Activated naive CD4-positive, alpha-beta T cell treated with anti-CD3 and anti-CD28 coated beads for 36 hours (primary cell): ENCODE measurements at regions of chr7 and their contacts with region 1.

Region 1: DNA sequence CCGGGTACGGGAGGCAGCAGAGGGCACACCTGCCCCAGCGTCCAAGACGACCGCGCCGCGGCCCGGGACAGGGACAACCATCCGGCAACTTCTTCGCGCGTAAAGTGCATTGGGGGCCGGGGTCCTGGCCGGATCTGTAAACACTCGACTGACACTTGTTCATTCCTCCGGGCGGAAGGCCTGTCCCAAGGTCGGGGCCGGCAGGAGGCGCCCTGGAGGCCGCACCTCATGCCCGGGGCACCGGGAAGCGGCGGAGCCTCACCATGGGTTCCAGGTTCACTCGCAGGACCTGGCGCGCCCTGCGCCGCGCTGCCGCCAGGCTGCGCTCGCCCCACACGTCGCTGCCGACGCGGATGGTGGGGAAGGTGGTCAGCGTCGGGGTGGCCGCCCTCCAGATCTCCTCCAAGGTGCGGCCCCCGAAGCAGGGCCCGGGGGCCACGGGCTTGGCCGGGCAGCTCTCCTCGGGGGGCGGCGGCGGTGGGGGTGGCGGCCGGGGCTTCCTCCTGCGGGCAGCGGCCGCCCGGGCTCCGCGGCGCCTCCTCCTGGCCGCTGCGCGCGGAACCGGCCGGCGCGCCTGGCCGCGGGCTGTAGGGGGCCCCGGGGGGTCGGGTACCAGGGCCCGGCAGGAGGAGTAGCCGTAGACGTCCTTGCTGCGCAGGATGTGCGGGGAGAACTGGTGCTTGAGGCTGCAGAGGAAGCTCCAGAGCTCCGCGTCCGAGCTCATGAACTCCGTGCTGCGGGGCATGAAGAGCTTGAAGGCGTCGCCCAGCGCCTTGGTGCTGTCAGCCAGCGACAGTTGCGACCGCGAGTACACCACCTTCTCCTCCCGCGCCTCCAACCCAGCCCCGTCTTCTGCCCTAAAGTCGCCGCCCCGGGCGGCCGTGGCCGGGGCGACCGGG is 746 bp downstream of the CCDC71L start:
- DNase-seq: peak; percentile 87
- H3K4me3 Mint-ChIP-seq: peak overlapping the region; percentile 87
- H3K27ac Mint-ChIP-seq: peak overlapping the region; percentile 95
- H3K4me1 Mint-ChIP-seq: peaks cover 23% of the 10 kb centered on the region
- H3K27me3 Mint-ChIP-seq: no peaks in the 10 kb centered on the region

Region 2: DNA sequence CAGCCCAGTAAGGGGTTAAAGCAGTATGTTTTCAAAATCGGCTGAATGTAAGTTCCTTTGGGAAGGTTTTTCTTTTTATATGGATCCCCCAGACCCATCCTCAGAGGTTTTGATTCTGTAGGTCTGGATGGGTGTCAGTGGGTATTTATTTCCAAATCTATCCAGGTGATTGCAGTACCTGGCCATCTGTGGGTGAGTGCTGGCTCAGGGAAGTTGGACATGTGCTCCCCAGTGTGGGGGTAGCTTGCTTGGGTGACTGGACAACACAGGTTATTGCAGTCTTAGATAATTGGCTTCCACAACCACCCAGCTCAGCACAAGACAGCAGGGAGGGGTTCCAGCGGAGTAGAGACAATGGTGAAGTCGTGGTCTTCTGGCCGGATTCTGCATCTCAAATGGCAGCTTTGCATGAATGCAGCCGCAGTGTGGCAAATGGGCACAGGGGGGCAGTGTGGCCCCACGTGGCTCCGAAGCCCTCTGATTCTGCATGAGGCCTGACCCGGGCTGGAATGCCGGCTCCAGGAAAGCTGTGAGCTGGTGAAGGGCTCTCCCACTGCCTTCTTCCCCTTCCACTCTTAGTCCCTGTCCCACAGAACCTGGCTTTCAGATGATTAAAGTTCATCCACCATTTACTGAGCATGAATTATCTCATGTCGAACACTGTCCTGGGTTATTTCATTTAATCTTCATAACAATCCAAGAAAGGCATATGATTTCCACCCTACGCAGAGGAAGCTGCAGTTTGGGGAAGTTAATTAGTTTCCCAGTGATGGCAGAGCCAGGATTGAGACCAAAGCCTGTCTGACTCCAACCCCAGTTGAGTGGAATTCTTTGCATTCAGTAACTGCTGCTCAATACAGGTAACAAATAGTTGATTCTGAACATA is 483.6 kb before region 1 on chr7:
- CTCF ChIA-PET with region 1: interaction called, 17 read pairs
- intact Hi-C with region 1: loop called (anchors 1 kb)
- DNase-seq: peak; percentile 84
- H3K4me3 Mint-ChIP-seq: no peak overlapping the region
- H3K27ac Mint-ChIP-seq: peak overlapping the region; percentile 9
- H3K4me1 Mint-ChIP-seq: peaks cover 11% of the 10 kb centered on the region
- H3K27me3 Mint-ChIP-seq: peaks cover 12% of the 10 kb centered on the region

Region 3: DNA sequence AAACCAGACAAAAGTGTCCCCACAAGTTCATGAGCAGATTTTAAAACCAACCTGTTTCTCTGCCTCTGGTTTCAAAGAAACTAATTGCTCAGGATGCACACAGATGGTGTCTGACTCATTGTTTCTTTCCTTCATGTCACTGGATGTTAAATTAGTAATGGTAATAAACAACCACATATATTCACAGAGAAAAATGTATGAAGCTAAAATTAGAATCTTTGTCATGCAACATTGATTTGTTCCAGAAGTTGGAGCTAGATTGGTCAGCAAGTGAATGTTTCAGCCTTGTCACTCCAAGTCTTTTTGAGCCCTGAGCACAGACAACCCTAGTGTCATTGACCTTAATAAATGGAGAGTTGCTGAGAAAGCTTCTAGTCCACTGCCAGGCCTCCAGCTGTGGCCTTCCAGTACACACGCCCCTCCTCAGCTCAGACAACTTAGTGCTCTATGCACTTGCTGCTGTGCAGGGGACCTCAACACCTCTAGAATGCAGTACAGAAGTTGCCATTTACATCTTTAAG is 175.1 kb before region 1 on chr7:
- CTCF ChIA-PET with region 1: interaction called, 6 read pairs
- intact Hi-C with region 1: loop called (anchors 5 kb)
- DNase-seq: peak; percentile 26
- H3K4me3 Mint-ChIP-seq: no peak overlapping the region
- H3K27ac Mint-ChIP-seq: peak overlapping the region; percentile 81
- H3K4me1 Mint-ChIP-seq: peaks cover 57% of the 10 kb centered on the region
- H3K27me3 Mint-ChIP-seq: peaks cover 23% of the 10 kb centered on the region

Region 4: GRCh38 chr7:106704000-106704840 is 44.0 kb after region 1 on chr7:
- CTCF ChIA-PET with region 1: interaction called, 4 read pairs
- intact Hi-C with region 1: loop called (anchors 1 kb)
- DNase-seq: peak; percentile 53
- H3K4me3 Mint-ChIP-seq: peak overlapping the region; percentile 3
- H3K27ac Mint-ChIP-seq: peak overlapping the region; percentile 50
- H3K4me1 Mint-ChIP-seq: peaks cover 24% of the 10 kb centered on the region
- H3K27me3 Mint-ChIP-seq: no peaks in the 10 kb centered on the region

Region 5: DNA sequence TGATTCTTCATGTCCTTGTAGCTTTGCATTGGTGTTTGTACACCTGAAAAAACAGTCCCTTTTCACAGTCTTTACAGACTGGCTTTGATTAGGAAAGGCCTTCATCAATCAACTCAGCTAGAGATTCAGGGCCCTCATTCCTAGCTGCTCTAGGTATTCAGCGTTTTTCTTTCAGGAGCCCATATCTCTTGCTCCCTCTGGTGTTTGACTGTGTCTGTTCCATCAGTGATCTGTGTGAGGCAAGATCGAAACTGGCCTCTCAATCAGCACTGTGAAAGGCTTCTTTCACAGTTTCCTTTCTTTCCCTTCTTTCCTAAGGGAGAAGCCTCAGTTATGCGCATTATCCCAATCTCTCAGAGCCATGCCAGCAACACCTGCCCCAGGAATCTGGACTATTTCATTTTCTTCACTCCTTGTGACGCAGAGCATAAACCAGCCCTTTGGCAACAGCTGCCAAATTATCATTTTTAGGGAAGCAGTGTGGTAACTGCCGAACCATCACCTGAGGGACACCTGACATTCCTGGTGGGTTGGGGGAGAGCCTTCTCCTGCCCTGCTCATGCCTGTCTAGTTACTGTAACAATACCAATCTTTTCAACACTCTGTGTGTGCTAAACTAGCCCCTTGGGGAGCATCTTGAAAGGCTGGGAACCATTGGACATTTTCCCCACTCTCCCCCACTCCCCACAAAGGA is 76.4 kb after region 1 on chr7:
- CTCF ChIA-PET with region 1: interaction called, 140 read pairs
- intact Hi-C with region 1: loop called (anchors 1 kb)
- DNase-seq: peak; percentile 72
- H3K4me3 Mint-ChIP-seq: no peak overlapping the region
- H3K27ac Mint-ChIP-seq: peak overlapping the region; percentile 74
- H3K4me1 Mint-ChIP-seq: peaks cover 27% of the 10 kb centered on the region
- H3K27me3 Mint-ChIP-seq: no peaks in the 10 kb centered on the region

Region 6: GRCh38 chr7:106865130-106866041 is 205.2 kb after region 1 on chr7 and contains the start of gene PIK3CG:
- CTCF ChIA-PET with region 1: no interaction called
- intact Hi-C with region 1: loop called (anchors 2 kb)
- DNase-seq: no peak
- H3K4me3 Mint-ChIP-seq: peak within 1 kb of the TSS; percentile 79
- H3K27ac Mint-ChIP-seq: peak within 1 kb of the TSS; percentile 65
- H3K4me1 Mint-ChIP-seq: peaks cover 77% of the 10 kb centered on the region
- H3K27me3 Mint-ChIP-seq: no peaks in the 10 kb centered on the region
- total RNA-seq, gene PIK3CG: 3.6 to 3.8 TPM

Region 7: DNA sequence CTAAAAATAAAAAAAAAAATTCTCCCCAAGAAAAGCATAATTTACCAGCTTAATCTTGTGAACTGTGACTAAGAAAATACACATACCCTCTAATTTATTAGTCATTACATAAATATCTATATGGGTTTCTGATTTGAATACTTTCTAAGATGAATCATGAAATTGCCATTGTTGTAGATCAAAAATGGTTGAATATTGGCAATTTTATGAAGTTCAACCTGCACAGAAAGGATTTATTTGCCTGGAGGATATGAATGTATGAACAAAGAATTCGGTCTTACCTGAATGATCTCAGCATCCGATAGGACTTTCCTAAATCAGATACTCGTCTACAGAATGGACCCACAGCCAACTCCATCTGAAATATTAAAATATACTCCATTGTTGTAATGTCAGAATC is 570.1 kb after region 1 on chr7:
- CTCF ChIA-PET with region 1: no interaction called
- intact Hi-C with region 1: no loop called
- DNase-seq: no peak
- H3K4me3 Mint-ChIP-seq: no peak overlapping the region
- H3K27ac Mint-ChIP-seq: no peak overlapping the region
- H3K4me1 Mint-ChIP-seq: no peaks in the 10 kb centered on the region
- H3K27me3 Mint-ChIP-seq: no peaks in the 10 kb centered on the region